Naive thymus-derived CD4-positive, alpha-beta T cell (primary cell): ENCODE measurements at regions of chr5 and their contacts with region 1.

Region 1: GRCh38 chr5:157271740-157272271 is 5.9 kb downstream of the CYFIP2 start:
- DNase-seq: peak; percentile 63 to 94 (median 91)
- ATAC-seq: peak; percentile 95
- H3K4me3 ChIP-seq: peak overlapping the region; percentile 37
- H3K4me3 Mint-ChIP-seq: peak overlapping the region; percentile 71 to 95 (median 84)
- H3K27ac ChIP-seq: peak overlapping the region; percentile 84
- H3K27ac Mint-ChIP-seq: peak overlapping the region; percentile 95 to 100 (median 99)
- H3K4me1 ChIP-seq: peaks cover 76 to 78% of the 10 kb centered on the region in 2 donors
- H3K4me1 Mint-ChIP-seq: peaks cover 73 to 95% (median 90%) of the 10 kb centered on the region in 7 donors
- H3K27me3 ChIP-seq: no peaks in the 10 kb centered on the region
- H3K27me3 Mint-ChIP-seq: no peaks in the 10 kb centered on the region

Region 2: DNA sequence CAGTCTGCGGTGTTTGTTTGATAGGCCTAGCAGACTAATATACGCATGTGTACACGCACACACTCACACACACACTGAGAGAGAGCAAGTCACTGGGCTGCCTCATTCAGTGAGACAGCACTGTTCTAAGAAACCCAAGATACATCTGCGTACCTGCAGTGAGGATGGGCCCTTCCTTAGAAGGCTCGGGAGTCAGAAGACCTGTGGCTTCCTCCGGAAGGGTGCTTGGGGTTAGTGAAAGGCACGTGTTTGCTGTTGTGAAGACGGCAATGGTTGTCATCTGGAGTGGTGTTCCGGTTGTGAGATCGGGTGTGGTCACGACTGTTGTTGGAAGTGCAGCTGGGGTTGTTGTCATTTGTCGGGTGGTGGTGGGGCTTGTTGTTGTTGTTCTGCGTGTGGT is 320.4 kb before region 1 on chr5:
- CTCF ChIA-PET with region 1: no interaction called
- POLR2A ChIA-PET with region 1: no interaction called
- intact Hi-C with region 1: no loop called
- DNase-seq: no peak
- ATAC-seq: peak; percentile 16
- H3K4me3 ChIP-seq: no peak overlapping the region
- H3K4me3 Mint-ChIP-seq: no peak overlapping the region
- H3K27ac ChIP-seq: no peak overlapping the region
- H3K27ac Mint-ChIP-seq: no peak overlapping the region
- H3K4me1 ChIP-seq: no peaks in the 10 kb centered on the region
- H3K4me1 Mint-ChIP-seq: peaks cover 0 to 38% (median 6%) of the 10 kb centered on the region in 7 donors
- H3K27me3 ChIP-seq: no peaks in the 10 kb centered on the region
- H3K27me3 Mint-ChIP-seq: no peaks in the 10 kb centered on the region

Region 3: DNA sequence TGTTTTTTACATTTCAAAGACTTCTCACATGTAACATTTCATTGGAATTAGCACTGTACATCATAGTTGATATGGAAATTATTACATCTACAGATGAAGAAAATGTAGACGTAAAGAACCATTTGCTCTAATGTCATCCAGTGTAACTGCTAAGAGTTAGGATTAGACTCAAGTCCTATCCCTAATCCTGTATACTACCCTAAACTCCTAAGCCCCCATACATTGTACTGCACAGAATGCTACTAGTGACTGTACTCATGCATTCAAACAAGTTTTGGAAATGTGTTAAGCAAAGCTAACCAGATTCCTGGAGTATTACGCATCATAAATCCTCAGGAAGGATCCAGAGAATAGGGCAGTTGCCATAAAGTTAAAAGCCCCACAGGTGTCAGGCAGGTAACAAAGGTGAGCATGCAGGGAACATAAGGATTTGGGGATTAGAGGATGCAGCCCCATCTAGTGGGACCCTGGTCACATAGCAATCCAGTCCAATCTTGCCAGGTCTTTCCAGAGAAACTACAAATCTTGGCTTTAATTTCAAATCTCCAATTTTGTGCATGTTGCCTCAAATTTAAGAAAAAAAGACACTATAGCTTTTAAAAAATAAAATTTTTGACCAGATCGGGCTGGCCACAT is 244.9 kb before region 1 on chr5:
- CTCF ChIA-PET with region 1: no interaction called
- POLR2A ChIA-PET with region 1: no interaction called
- intact Hi-C with region 1: loop called in 1 of 2 experiments (anchors 5 kb)
- DNase-seq: no peak
- ATAC-seq: no peak
- H3K4me3 ChIP-seq: no peak overlapping the region
- H3K4me3 Mint-ChIP-seq: peak overlapping the region in 1 of 10 donors; percentile 21
- H3K27ac ChIP-seq: no peak overlapping the region
- H3K27ac Mint-ChIP-seq: peak overlapping the region in 3 of 9 donors; percentile 41 to 89 (median 51)
- H3K4me1 ChIP-seq: peaks cover 16 to 23% of the 10 kb centered on the region in 2 donors
- H3K4me1 Mint-ChIP-seq: peaks cover 15 to 91% (median 30%) of the 10 kb centered on the region in 7 donors
- H3K27me3 ChIP-seq: no peaks in the 10 kb centered on the region
- H3K27me3 Mint-ChIP-seq: no peaks in the 10 kb centered on the region

Region 4: DNA sequence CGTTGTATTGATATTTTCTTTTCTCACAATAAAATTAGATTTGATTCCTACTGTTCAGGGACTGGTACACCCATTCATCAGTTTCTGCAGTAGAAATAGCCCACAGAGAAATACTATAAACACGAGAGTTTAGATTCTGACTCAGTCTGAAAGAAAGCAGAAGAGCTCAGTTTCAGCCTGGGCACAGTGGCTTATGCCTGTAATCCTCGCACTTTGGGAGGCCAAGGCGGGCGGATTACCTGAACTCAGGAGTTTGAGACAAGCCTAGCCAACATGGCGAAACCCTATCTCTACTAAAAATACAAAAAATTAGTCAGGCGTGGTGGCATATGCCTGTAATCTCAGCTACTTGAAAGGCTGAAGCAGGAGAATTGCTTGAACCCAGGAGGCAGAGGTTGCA is 82.6 kb before region 1 on chr5:
- CTCF ChIA-PET with region 1: interaction called, 3 read pairs
- POLR2A ChIA-PET with region 1: interaction called, 17 read pairs
- intact Hi-C with region 1: no loop called
- DNase-seq: no peak
- ATAC-seq: no peak
- H3K4me3 ChIP-seq: peak overlapping the region; percentile 68
- H3K4me3 Mint-ChIP-seq: peak overlapping the region; percentile 83 to 100 (median 96)
- H3K27ac ChIP-seq: peak overlapping the region; percentile 81
- H3K27ac Mint-ChIP-seq: peak overlapping the region; percentile 63 to 98 (median 91)
- H3K4me1 ChIP-seq: peaks cover 75 to 81% of the 10 kb centered on the region in 2 donors
- H3K4me1 Mint-ChIP-seq: peaks cover 56 to 94% (median 83%) of the 10 kb centered on the region in 7 donors
- H3K27me3 ChIP-seq: no peaks in the 10 kb centered on the region
- H3K27me3 Mint-ChIP-seq: no peaks in the 10 kb centered on the region

Region 5: GRCh38 chr5:157245477-157245876 is 26.3 kb before region 1 on chr5:
- CTCF ChIA-PET with region 1: interaction called, 7 read pairs
- POLR2A ChIA-PET with region 1: interaction called, 200 read pairs
- intact Hi-C with region 1: loop called in 1 of 2 experiments (anchors 1 kb)
- DNase-seq: no peak
- ATAC-seq: no peak
- H3K4me3 ChIP-seq: no peak overlapping the region
- H3K4me3 Mint-ChIP-seq: peak overlapping the region in 3 of 10 donors; percentile 23 to 75 (median 27)
- H3K27ac ChIP-seq: peak overlapping the region; percentile 36
- H3K27ac Mint-ChIP-seq: peak overlapping the region; percentile 63 to 98 (median 86)
- H3K4me1 ChIP-seq: peaks cover 45 to 67% of the 10 kb centered on the region in 2 donors
- H3K4me1 Mint-ChIP-seq: peaks cover 41 to 87% (median 81%) of the 10 kb centered on the region in 7 donors
- H3K27me3 ChIP-seq: no peaks in the 10 kb centered on the region
- H3K27me3 Mint-ChIP-seq: no peaks in the 10 kb centered on the region

Region 6: GRCh38 chr5:157283434-157283833 is 11.6 kb after region 1 on chr5:
- CTCF ChIA-PET with region 1: interaction called, 22 read pairs
- POLR2A ChIA-PET with region 1: interaction called, 53 read pairs
- intact Hi-C with region 1: loop called (anchors 1 kb)
- DNase-seq: peak in 4 of 9 donors; percentile 21 to 45 (median 36)
- ATAC-seq: peak; percentile 91
- H3K4me3 ChIP-seq: no peak overlapping the region
- H3K4me3 Mint-ChIP-seq: peak overlapping the region; percentile 6 to 75 (median 60)
- H3K27ac ChIP-seq: peak overlapping the region; percentile 37
- H3K27ac Mint-ChIP-seq: peak overlapping the region; percentile 60 to 98 (median 84)
- H3K4me1 ChIP-seq: peaks cover 47 to 79% of the 10 kb centered on the region in 2 donors
- H3K4me1 Mint-ChIP-seq: peaks cover 62 to 93% (median 90%) of the 10 kb centered on the region in 7 donors
- H3K27me3 ChIP-seq: no peaks in the 10 kb centered on the region
- H3K27me3 Mint-ChIP-seq: no peaks in the 10 kb centered on the region

Region 7: DNA sequence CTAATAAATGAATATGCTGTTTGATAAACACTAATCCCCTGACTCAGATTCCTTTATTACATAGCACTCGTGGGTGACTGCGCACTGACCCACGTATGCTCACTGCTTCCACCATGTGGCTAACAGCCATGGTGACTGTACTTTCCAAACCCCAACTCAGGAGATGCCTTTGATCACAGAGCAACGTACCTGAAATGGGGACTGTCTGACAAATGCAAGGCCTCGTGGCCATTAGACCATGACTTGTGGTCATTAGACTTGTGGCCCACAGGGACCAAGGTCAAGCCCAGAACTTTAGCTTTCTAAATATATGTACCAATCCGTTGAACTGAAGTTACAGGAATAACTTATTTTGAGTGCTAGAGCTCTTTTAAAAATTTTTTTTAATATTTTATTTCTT is 40.7 kb after region 1 on chr5:
- CTCF ChIA-PET with region 1: interaction called, 10 read pairs
- POLR2A ChIA-PET with region 1: interaction called, 59 read pairs
- intact Hi-C with region 1: loop called in 1 of 2 experiments (anchors 1 kb)
- DNase-seq: peak in 8 of 9 donors; percentile 51 to 71 (median 65)
- ATAC-seq: peak; percentile 96
- H3K4me3 ChIP-seq: no peak overlapping the region
- H3K4me3 Mint-ChIP-seq: peak overlapping the region in 2 of 10 donors; percentile 35
- H3K27ac ChIP-seq: peak overlapping the region; percentile 39
- H3K27ac Mint-ChIP-seq: peak overlapping the region; percentile 50 to 94 (median 86)
- H3K4me1 ChIP-seq: peaks cover 22 to 36% of the 10 kb centered on the region in 2 donors
- H3K4me1 Mint-ChIP-seq: peaks cover 18 to 59% (median 42%) of the 10 kb centered on the region in 7 donors
- H3K27me3 ChIP-seq: no peaks in the 10 kb centered on the region
- H3K27me3 Mint-ChIP-seq: no peaks in the 10 kb centered on the region

Region 8: GRCh38 chr5:158180407-158180806 is 908.6 kb after region 1 on chr5:
- CTCF ChIA-PET with region 1: no interaction called
- POLR2A ChIA-PET with region 1: no interaction called
- intact Hi-C with region 1: no loop called
- DNase-seq: no peak
- ATAC-seq: no peak
- H3K4me3 ChIP-seq: no peak overlapping the region
- H3K4me3 Mint-ChIP-seq: no peak overlapping the region
- H3K27ac ChIP-seq: no peak overlapping the region
- H3K27ac Mint-ChIP-seq: no peak overlapping the region
- H3K4me1 ChIP-seq: no peaks in the 10 kb centered on the region
- H3K4me1 Mint-ChIP-seq: peaks cover 0 to 3% (median 0%) of the 10 kb centered on the region in 7 donors
- H3K27me3 ChIP-seq: no peaks in the 10 kb centered on the region
- H3K27me3 Mint-ChIP-seq: peaks cover 0 to 9% (median 0%) of the 10 kb centered on the region in 5 donors